Endothelial cell of umbilical vein (primary cell): ENCODE measurements at regions of chr17 and their contacts with region 1.

Region 1: GRCh38 chr17:35063514-35064223 is at the start of gene RFFL:
- DNase-seq: peak; percentile 95
- H3K4me3 ChIP-seq: no peak within 1 kb of the TSS
- H3K27ac ChIP-seq: peak within 1 kb of the TSS; percentile 81
- H3K4me1 ChIP-seq: peaks cover 7% of the 10 kb centered on the region
- H3K27me3 ChIP-seq: no peaks in the 10 kb centered on the region
- CTCF ChIP-seq: peak in 1 of 2 donors; percentile 11
- POLR2A ChIP-seq: peak; percentile 28
- total RNA-seq, gene RFFL: 14.1 and 14.2 TPM in 2 replicates

Region 2: DNA sequence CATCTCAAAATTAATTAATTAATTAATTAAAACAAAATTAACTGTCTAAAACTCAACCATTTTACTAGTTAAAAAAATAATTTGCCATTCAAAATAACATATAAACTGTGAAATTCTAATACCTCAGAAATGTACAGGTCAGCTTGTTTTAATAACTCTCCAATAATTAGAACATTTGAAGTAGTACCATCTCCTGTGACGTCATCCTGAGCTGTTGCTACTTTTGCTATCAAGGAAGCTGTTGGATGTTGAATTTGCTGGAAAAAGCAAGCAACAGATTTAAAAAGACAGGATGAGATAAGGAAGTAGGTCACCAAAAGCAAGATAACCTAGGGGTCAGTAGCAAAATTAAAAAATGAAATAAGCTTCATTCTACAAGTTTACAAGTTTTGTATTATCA is 105.2 kb before region 1 on chr17:
- CTCF ChIA-PET with region 1: no interaction called
- POLR2A ChIA-PET with region 1: no interaction called
- dilution Hi-C with region 1: no loop called
- intact Hi-C with region 1: no loop called
- DNase-seq: no peak
- H3K4me3 ChIP-seq: no peak overlapping the region
- H3K27ac ChIP-seq: no peak overlapping the region
- H3K4me1 ChIP-seq: peaks cover 16% of the 10 kb centered on the region
- H3K27me3 ChIP-seq: peaks cover 1 to 2% of the 10 kb centered on the region in 2 experiments
- CTCF ChIP-seq: no peak
- POLR2A ChIP-seq: no peak

Region 3: DNA sequence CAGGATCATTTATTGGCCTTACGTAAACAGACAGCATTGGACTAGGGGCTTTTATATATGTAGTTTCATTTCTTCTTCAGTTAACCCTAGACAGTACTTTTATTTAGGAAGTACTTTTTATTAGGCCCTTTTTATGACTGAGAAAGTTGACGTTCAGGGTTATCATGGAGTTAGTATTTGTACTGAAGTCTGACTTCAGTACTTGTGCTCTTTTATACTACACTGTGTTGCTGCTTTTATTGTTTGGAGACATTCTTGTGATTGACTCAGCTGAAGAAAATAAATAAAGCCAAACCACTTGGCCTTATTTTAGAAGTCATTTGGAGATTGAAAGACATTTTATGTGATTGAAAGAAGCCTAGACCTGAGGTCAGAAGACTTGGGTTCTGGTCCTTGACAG is 76.4 kb before region 1 on chr17:
- CTCF ChIA-PET with region 1: no interaction called
- POLR2A ChIA-PET with region 1: no interaction called
- dilution Hi-C with region 1: no loop called
- intact Hi-C with region 1: no loop called
- DNase-seq: no peak
- H3K4me3 ChIP-seq: no peak overlapping the region
- H3K27ac ChIP-seq: no peak overlapping the region
- H3K4me1 ChIP-seq: peaks cover under 1% of the 10 kb centered on the region
- H3K27me3 ChIP-seq: no peaks in the 10 kb centered on the region
- CTCF ChIP-seq: no peak
- POLR2A ChIP-seq: no peak

Region 4: GRCh38 chr17:34998205-34998604 is 65.5 kb before region 1 on chr17:
- CTCF ChIA-PET with region 1: interaction called, 9 read pairs
- POLR2A ChIA-PET with region 1: interaction called, 4 read pairs
- dilution Hi-C with region 1: no loop called
- intact Hi-C with region 1: loop called (anchors 1 kb)
- DNase-seq: peak; percentile 78
- H3K4me3 ChIP-seq: no peak overlapping the region
- H3K27ac ChIP-seq: no peak overlapping the region
- H3K4me1 ChIP-seq: peaks cover 2% of the 10 kb centered on the region
- H3K27me3 ChIP-seq: no peaks in the 10 kb centered on the region
- CTCF ChIP-seq: peak; percentile 92 to 95
- POLR2A ChIP-seq: no peak

Region 5: GRCh38 chr17:35082073-35082657 is 18.5 kb after region 1 on chr17:
- CTCF ChIA-PET with region 1: interaction called, 21 read pairs
- POLR2A ChIA-PET with region 1: interaction called, 4 read pairs
- dilution Hi-C with region 1: no loop called
- intact Hi-C with region 1: no loop called
- DNase-seq: peak; percentile 71
- H3K4me3 ChIP-seq: no peak overlapping the region
- H3K27ac ChIP-seq: peak overlapping the region; percentile 31
- H3K4me1 ChIP-seq: peaks cover 22% of the 10 kb centered on the region
- H3K27me3 ChIP-seq: no peaks in the 10 kb centered on the region
- CTCF ChIP-seq: no peak
- POLR2A ChIP-seq: no peak

Region 6: GRCh38 chr17:35088881-35089585 is 25.4 kb after region 1 on chr17:
- CTCF ChIA-PET with region 1: interaction called, 23 read pairs
- POLR2A ChIA-PET with region 1: interaction called, 4 read pairs
- dilution Hi-C with region 1: no loop called
- intact Hi-C with region 1: loop called (anchors 1 kb)
- DNase-seq: peak; percentile 73
- H3K4me3 ChIP-seq: peak overlapping the region; percentile 65 to 81 (median 71)
- H3K27ac ChIP-seq: peak overlapping the region; percentile 72
- H3K4me1 ChIP-seq: peaks cover 22% of the 10 kb centered on the region
- H3K27me3 ChIP-seq: no peaks in the 10 kb centered on the region
- CTCF ChIP-seq: peak; percentile 76 to 77
- POLR2A ChIP-seq: peak; percentile 45